MCF 10A (cell line): ENCODE measurements at regions of chr12 and their contacts with region 1.

Region 1: DNA sequence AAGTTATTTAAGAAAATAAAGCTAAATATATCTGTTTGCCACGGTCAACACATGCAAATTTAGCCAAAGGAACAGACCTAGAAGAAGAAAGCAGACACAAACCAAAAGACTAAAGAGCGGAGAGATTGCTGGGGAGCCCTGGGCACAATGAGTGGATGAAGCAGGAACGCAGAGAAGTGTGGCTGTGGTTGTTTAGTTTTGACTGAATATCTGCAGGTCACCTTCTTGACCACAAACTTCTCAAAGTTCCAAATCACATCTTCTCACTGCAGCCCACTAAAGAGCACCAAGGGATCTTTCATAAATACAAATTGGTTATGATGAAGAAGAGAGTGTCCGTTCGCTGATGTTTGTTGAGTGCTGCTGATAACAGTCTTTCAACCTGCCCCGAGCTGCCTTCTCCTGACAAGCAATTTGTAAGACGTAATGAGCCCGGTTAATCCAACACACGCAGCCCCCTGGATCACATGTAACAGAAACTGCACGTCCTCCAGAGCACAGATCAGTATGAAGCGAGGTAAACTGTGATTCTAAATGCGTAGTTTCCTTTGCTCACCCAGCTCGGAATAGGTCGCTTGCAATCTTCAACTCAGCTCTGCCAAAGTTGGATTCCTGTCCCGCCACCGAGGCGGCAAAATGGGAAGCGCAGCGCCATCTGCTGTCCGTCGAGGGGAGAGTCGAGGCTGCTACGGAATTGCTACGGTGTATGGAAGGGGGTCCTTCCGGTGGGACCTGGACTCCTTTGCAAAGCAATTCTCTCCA is 120.8 kb downstream of the GXYLT1 start:
- DNase-seq: peak; percentile 74
- H3K4me3 Mint-ChIP-seq: peak overlapping the region; percentile 46
- H3K27ac Mint-ChIP-seq: no peak overlapping the region
- H3K4me1 Mint-ChIP-seq: peaks cover 7% of the 10 kb centered on the region
- H3K27me3 Mint-ChIP-seq: no peaks in the 10 kb centered on the region
- CTCF ChIP-seq: peak; percentile 95

Region 2: GRCh38 chr12:40312982-40313576 is 1710.8 kb before region 1 on chr12:
- CTCF ChIA-PET with region 1: no interaction called
- POLR2A ChIA-PET with region 1: no interaction called
- intact Hi-C with region 1: no loop called
- DNase-seq: peak; percentile 34
- H3K4me3 Mint-ChIP-seq: no peak overlapping the region
- H3K27ac Mint-ChIP-seq: no peak overlapping the region
- H3K4me1 Mint-ChIP-seq: peaks cover 6% of the 10 kb centered on the region
- H3K27me3 Mint-ChIP-seq: no peaks in the 10 kb centered on the region
- CTCF ChIP-seq: peak; percentile 61

Region 3: GRCh38 chr12:41277116-41277945 is 746.6 kb before region 1 on chr12:
- CTCF ChIA-PET with region 1: interaction called, 204 read pairs
- POLR2A ChIA-PET with region 1: interaction called, 3 read pairs
- intact Hi-C with region 1: loop called (anchors 1 kb)
- DNase-seq: peak; percentile 52
- H3K4me3 Mint-ChIP-seq: no peak overlapping the region
- H3K27ac Mint-ChIP-seq: no peak overlapping the region
- H3K4me1 Mint-ChIP-seq: no peaks in the 10 kb centered on the region
- H3K27me3 Mint-ChIP-seq: peaks cover 35% of the 10 kb centered on the region
- CTCF ChIP-seq: peak; percentile 57

Region 4: GRCh38 chr12:41627476-41627875 is 396.4 kb before region 1 on chr12:
- CTCF ChIA-PET with region 1: interaction called, 10 read pairs
- POLR2A ChIA-PET with region 1: no interaction called
- intact Hi-C with region 1: no loop called
- DNase-seq: no peak
- H3K4me3 Mint-ChIP-seq: no peak overlapping the region
- H3K27ac Mint-ChIP-seq: no peak overlapping the region
- H3K4me1 Mint-ChIP-seq: no peaks in the 10 kb centered on the region
- H3K27me3 Mint-ChIP-seq: peaks cover 3% of the 10 kb centered on the region
- CTCF ChIP-seq: no peak

Region 5: DNA sequence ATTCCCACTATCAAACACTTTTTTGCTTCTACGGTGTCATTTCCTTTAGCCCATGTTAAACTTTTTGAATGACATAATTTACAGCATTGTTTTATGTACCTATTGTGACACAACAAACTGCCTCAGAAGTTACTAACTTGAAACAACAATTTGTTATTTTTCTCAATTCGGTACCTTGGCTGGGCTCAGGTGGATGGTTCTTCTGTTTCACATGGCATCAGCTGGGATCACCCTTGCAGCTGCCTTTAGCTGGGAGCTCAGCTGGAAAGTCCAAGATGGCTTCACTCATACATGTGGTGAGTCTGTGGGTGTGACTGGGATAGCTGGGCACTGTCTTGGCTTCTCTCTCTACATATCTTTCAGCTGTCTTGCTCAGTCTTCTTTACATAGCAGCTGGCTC is 35.2 kb before region 1 on chr12:
- CTCF ChIA-PET with region 1: interaction called, 11 read pairs
- POLR2A ChIA-PET with region 1: no interaction called
- intact Hi-C with region 1: no loop called
- DNase-seq: no peak
- H3K4me3 Mint-ChIP-seq: no peak overlapping the region
- H3K27ac Mint-ChIP-seq: no peak overlapping the region
- H3K4me1 Mint-ChIP-seq: no peaks in the 10 kb centered on the region
- H3K27me3 Mint-ChIP-seq: no peaks in the 10 kb centered on the region
- CTCF ChIP-seq: no peak

Region 6: GRCh38 chr12:42039176-42039575 is 15.3 kb after region 1 on chr12:
- CTCF ChIA-PET with region 1: interaction called, 18 read pairs
- POLR2A ChIA-PET with region 1: interaction called, 3 read pairs
- intact Hi-C with region 1: no loop called
- DNase-seq: peak; percentile 83
- H3K4me3 Mint-ChIP-seq: no peak overlapping the region
- H3K27ac Mint-ChIP-seq: no peak overlapping the region
- H3K4me1 Mint-ChIP-seq: peaks cover 8% of the 10 kb centered on the region
- H3K27me3 Mint-ChIP-seq: no peaks in the 10 kb centered on the region
- CTCF ChIP-seq: no peak